Activated CD4-positive, alpha-beta T cell treated with anti-CD3 and anti-CD28 coated beads for 36 hours (primary cell): ENCODE measurements at regions of chr16 and their contacts with region 1.

Region 1: DNA sequence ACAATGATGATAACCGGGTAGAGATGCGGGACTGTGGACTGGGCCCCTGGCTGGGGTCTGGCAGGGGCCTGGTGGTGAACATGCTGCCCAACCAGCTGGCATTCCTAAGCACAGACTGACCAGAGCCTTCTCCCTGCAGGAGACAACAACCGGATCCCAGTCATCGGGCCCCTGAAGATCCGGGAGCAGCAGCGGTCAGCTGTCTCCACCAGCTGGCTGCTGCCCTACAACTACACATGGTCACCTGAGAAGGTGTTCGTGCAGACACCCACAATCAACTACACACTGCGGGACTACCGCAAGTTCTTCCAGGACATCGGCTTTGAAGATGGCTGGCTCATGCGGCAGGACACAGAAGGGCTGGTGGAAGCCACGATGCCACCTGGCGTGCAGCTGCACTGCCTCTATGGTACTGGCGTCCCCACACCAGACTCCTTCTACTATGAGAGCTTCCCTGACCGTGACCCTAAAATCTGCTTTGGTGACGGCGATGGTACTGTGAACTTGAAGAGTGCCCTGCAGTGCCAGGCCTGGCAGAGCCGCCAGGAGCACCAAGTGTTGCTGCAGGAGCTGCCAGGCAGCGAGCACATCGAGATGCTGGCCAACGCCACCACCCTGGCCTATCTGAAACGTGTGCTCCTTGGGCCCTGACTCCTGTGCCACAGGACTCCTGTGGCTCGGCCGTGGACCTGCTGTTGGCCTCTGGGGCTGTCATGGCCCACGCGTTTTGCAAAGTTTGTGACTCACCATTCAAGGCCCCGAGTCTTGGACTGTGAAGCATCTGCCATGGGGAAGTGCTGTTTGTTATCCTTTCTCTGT is 5.1 kb upstream of the SLC7A6 start:
- DNase-seq: no peak
- ATAC-seq: no peak
- H3K4me3 Mint-ChIP-seq: no peak overlapping the region
- H3K27ac Mint-ChIP-seq: no peak overlapping the region
- H3K4me1 Mint-ChIP-seq: peaks cover 20% of the 10 kb centered on the region
- H3K27me3 Mint-ChIP-seq: no peaks in the 10 kb centered on the region

Region 2: DNA sequence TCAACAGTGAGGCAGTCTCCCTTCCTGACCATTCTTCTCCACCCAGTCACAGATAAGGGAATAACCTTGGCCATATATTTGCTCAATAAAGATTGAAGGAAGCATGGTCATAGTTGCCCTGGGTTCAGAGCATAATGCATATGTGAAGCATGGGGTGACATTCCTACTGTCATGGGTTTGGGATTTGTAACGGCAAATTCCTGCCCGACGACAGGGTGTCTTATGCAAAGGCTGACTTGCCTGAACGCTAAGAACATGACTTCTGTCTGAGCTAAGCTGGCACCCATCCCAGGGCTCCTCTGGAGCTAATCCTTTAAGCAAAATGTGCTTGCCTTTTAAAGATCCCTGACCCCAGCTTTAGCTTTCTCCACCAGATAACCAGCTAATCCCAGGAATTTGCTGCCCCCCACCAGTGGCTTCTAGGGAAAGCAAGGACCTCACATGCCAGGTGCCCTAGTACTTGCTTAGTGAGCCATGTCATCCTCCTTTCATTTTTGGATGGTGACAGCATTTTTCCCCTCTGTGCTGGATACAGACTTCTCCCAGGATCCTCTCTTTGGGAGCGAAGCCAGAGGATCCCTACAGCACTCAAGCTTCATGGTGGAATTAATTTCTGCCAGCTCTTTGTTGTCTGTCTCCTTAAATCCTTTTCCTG is 39.8 kb after region 1 on chr16:
- CTCF ChIA-PET with region 1: interaction called, 54 read pairs
- POLR2A ChIA-PET with region 1: interaction called, 3 read pairs
- intact Hi-C with region 1: no loop called
- DNase-seq: no peak
- ATAC-seq: no peak
- H3K4me3 Mint-ChIP-seq: no peak overlapping the region
- H3K27ac Mint-ChIP-seq: peak overlapping the region; percentile 55
- H3K4me1 Mint-ChIP-seq: peaks cover 13% of the 10 kb centered on the region
- H3K27me3 Mint-ChIP-seq: no peaks in the 10 kb centered on the region